ENCODE measurements at regions of chr13 and their contacts with region 1.

Region 1: GRCh38 chr13:44969551-44970484 is 19.5 kb downstream of the NUFIP1 start:
- DNase-seq: peak; percentile 58

Region 2: GRCh38 chr13:44484562-44485138 is 485.2 kb before region 1 on chr13:
- in situ Hi-C with region 1: loop called (anchors 25 kb)
- DNase-seq: no peak